Head of caudate nucleus (tissue), 42 donors: ENCODE measurements at regions of chr10 and their contacts with region 1.

Region 1: DNA sequence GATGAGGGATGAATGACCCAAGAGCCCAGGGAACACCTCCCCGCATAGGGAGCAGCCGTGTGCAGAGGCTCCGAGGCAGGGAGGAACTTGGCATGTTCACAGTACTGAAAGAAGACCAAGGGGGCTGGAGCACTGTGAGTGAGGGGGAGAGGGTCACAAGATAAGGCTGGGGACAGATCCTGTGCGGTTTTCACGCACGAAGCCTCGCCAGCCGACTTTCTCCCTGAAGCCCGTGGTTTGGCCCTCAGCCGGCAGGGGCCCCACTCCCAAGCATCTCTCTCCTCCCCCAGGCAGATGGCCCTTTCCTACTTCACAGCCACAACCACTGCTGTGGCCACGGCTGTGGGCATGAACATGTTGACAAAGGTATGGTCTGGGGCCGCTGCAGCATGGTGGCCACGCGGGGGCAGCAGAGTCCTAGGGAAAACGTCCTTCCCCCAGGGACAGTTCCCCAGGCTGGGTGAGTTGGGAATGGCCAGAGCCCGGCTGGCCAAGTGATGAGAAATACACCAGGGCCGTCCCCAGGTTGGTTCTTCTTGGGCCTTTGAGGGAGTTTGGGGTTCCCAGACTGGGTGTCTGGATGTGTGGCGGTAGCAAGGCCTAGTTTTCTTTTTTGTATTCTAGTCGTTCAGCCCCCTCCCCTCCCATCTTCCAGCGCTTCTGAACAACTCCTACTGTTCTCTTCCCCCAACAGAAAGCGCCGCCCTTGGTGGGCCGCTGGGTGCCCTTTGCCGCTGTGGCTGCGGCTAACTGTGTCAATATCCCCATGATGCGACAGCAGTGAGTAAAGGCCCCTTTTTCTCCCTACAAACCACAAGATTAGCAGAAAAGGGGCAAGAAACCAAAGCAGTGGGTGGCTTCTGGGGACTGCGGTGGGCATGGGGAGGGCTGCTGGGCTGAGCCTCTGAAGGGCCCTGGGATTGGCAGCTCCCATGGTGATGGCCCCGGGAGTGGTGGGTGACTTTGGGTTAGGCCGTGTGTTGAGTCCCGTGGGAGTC is 14.4 kb upstream of the WBP1L start:
- DNase-seq: peak; percentile 76 to 96 (median 89)

Region 2: GRCh38 chr10:102841827-102842345 is 112.6 kb after region 1 on chr10:
- intact Hi-C with region 1: loop called (anchors 10 kb)
- DNase-seq: no peak

Region 3: GRCh38 chr10:102904346-102904745 is 175.0 kb after region 1 on chr10:
- intact Hi-C with region 1: loop called (anchors 5 kb)
- DNase-seq: no peak

Region 4: GRCh38 chr10:103069453-103070331 is 340.4 kb after region 1 on chr10:
- intact Hi-C with region 1: loop called (anchors 10 kb)
- DNase-seq: peak; percentile 46 to 85 (median 70)

Region 5: DNA sequence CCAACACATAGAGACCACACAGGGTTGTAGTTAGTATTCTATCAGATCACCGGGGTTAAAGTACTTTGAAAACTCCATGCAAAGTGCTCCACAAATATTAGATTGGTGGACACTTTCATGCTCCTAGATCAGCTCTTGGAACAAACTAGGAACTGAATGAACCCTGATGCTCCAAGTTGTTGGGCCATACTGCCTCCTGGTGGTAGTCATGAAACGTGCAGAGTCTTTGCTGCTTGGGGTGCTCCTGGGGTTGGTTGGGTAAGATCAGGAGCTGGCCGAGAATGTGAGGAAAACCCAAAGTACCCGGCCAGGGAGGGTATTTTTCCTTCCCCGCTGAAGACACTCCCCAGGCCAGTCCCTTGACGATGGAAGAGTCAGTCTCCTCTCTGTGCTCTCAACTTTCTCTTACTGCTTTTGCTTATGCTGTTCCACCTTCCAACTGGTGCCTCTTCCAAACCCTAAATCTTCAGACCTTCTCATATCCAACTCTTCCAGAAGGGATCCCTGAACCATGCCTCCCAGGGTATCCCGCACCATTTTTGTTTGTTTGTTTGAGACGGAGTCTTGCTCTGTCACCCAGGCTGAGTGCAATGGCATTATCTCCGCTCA is 515.4 kb after region 1 on chr10:
- intact Hi-C with region 1: loop called (anchors 10 kb)
- DNase-seq: peak; percentile 34 to 92 (median 81)